ENCODE measurements at regions of chr13 and their contacts with region 1.

Region 1: DNA sequence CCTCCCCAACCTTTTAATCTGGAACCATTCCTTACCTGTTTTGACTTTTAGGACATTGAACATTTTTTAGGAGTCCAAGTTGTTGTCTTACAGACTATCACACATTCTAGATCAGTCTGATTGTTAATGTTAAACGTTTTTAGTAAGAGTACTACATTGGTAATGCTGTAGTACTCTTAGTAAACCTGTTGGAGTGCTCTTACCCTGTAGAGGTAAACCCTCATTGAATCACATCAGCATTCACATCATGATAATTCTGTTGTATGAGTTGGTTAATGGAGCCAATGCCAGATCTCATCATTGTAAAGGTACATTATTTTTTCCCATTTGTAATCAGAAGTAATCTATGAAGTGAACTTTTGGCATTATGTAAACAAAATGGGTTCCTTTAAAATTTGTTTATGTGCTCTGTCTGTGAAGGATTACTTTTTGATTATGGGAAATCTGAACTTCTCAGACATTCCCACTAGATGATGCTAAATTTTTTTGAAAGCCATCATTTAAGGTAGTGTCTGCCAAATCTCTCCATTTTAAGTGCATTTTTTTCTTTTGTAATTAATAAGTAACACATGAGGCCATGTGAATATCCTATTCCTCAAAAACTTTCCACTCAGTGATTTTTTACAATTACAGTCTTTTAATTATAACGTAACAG is 55.2 kb downstream of the VWA8 start:
- DNase-seq: no peak
- ATAC-seq: no peak
- H3K4me3 ChIP-seq: no peak overlapping the region
- H3K27ac ChIP-seq: no peak overlapping the region
- H3K4me1 ChIP-seq: no peaks in the 10 kb centered on the region
- H3K27me3 ChIP-seq: no peaks in the 10 kb centered on the region

Region 2: GRCh38 chr13:41942462-41943094 is 36.9 kb after region 1 on chr13:
- intact Hi-C with region 1: no loop called
- DNase-seq: no peak
- ATAC-seq: no peak
- H3K4me3 ChIP-seq: no peak overlapping the region
- H3K27ac ChIP-seq: no peak overlapping the region
- H3K4me1 ChIP-seq: no peaks in the 10 kb centered on the region
- H3K27me3 ChIP-seq: no peaks in the 10 kb centered on the region

Region 3: GRCh38 chr13:42039946-42040729 is 134.4 kb after region 1 on chr13:
- intact Hi-C with region 1: loop called in 1 of 2 experiments (anchors 10 kb)
- DNase-seq: peak; percentile 95 to 98
- ATAC-seq: peak; percentile 94
- H3K4me3 ChIP-seq: peak overlapping the region; percentile 81 to 95
- H3K27ac ChIP-seq: peak overlapping the region; percentile 94 to 97
- H3K4me1 ChIP-seq: no peaks in the 10 kb centered on the region
- H3K27me3 ChIP-seq: no peaks in the 10 kb centered on the region

Region 4: GRCh38 chr13:42102961-42103865 is 197.5 kb after region 1 on chr13:
- intact Hi-C with region 1: loop called (anchors 10 kb)
- DNase-seq: no peak
- ATAC-seq: no peak
- H3K4me3 ChIP-seq: no peak overlapping the region
- H3K27ac ChIP-seq: no peak overlapping the region
- H3K4me1 ChIP-seq: peaks cover 2 to 6% of the 10 kb centered on the region in 2 donors
- H3K27me3 ChIP-seq: no peaks in the 10 kb centered on the region

Measured in aorta (tissue), 5 donors.